Panc1 (cell line): ENCODE measurements at regions of chr16 and their contacts with region 1.

Region 1: GRCh38 chr16:228151-228817 is 965 bp downstream of the LUC7L start:
- DNase-seq: no peak
- ATAC-seq: peak; percentile 52
- H3K4me3 ChIP-seq: peak overlapping the region; percentile 90 to 99
- H3K27ac ChIP-seq: peak overlapping the region; percentile 88
- H3K4me1 ChIP-seq: peaks cover 9% of the 10 kb centered on the region
- H3K27me3 ChIP-seq: no peaks in the 10 kb centered on the region
- CTCF ChIP-seq: no peak

Region 2: GRCh38 chr16:177394-177822 is 50.9 kb before region 1 on chr16:
- CTCF ChIA-PET with region 1: no interaction called
- POLR2A ChIA-PET with region 1: no interaction called
- in situ Hi-C with region 1: no loop called
- intact Hi-C with region 1: no loop called
- DNase-seq: no peak
- ATAC-seq: no peak
- H3K4me3 ChIP-seq: no peak overlapping the region
- H3K27ac ChIP-seq: no peak overlapping the region
- H3K4me1 ChIP-seq: peaks cover 6% of the 10 kb centered on the region; the same call in 1 of the 2 replicates
- H3K27me3 ChIP-seq: no peaks in the 10 kb centered on the region
- CTCF ChIP-seq: no peak

Region 3: DNA sequence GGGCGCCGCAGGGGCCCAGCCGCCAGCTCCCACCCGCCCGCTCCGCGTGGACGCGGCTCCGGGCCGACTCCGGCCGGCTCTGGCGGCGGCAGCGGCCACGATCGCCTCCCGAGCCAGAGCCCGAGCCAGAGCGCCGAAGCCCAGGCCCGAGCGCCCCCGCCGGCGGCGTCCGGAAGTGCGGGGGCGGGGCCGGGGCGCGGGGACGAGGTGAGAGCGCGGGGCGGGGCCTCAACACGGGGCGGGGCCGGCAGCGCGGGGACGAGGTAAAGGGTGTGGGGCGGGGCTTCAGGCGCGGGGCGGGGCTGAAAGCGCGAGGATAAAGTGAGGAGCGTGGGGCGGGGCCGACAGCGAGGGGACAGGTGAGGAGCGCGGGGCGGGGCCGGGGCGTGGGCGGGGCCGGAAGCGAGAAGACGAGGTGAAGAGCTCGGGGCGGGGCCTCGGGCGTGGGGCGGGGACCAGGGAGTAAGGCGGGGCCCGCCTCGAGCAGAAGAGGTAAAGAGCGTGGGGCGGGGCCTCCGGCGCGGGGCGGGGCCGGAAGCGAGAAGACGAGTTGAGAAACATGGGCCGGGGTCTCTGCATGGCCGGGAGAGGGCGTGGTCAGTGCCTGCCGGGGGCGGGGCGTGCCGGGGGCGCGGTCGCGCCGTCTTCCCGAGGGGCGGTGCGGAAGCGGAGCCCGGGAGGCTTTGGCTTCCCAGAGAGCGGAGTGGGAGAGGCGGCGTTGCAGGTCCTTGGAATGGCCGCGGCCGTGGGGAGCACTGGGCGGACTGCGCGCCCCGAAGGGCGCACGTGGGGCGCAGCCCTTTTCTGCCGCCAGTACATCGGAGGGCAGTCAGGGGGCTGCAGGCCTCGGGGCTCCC is 124.5 kb after region 1 on chr16 and contains the start of gene AXIN1:
- CTCF ChIA-PET with region 1: interaction called, 4 read pairs
- POLR2A ChIA-PET with region 1: interaction called, 19 read pairs
- in situ Hi-C with region 1: no loop called
- intact Hi-C with region 1: no loop called
- DNase-seq: peak; percentile 39
- ATAC-seq: peak; percentile 86
- H3K4me3 ChIP-seq: peak within 1 kb of the TSS; percentile 71 to 82
- H3K27ac ChIP-seq: peak within 1 kb of the TSS; percentile 83
- H3K4me1 ChIP-seq: peaks cover 8% of the 10 kb centered on the region
- H3K27me3 ChIP-seq: no peaks in the 10 kb centered on the region
- CTCF ChIP-seq: peak; percentile 89
- total RNA-seq, gene AXIN1: 53.3 TPM